ENCODE measurements at regions of chr1 and their contacts with region 1.

Region 1: DNA sequence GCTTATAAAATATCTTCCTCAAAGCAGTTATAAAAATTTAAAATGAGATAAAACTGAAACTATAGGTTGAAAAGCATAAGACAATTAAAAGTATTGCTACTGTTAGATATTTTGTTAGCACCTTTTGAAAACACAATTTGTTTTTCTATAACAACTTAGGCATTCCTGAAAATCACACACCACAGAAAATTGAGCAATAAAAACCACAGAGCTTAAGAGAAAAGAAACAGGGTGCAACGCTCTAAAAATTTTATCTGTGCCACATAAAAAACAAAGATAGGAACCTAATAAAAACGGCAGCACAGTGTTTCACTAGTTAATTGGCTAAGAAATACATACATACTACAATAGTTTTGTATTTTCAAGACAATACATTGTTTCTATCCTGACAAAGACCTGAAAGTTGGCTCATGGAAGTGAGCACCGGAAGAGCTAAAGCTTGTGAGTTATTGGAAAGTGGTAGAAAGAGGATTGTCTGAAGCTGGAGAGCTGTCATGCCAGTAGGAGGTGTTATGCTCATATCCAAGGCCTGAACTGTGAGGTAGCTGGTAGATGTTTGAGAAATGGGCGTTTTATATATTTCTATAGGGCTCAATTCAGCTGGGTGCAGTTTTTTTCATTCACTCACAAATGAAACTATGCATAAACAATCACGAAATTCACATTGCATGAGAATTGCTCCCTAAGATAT is 45.8 kb downstream of the RGS7 start:
- DNase-seq: no peak
- H3K4me3 ChIP-seq: no peak overlapping the region
- H3K27ac ChIP-seq: no peak overlapping the region
- H3K4me1 ChIP-seq: no peaks in the 10 kb centered on the region
- H3K27me3 ChIP-seq: no peaks in the 10 kb centered on the region
- CTCF ChIP-seq: no peak
- POLR2A ChIP-seq: no peak

Region 2: GRCh38 chr1:241156231-241156965 is 154.8 kb before region 1 on chr1:
- CTCF ChIA-PET with region 1: no interaction called
- POLR2A ChIA-PET with region 1: no interaction called
- dilution Hi-C with region 1: no loop called
- intact Hi-C with region 1: loop called (anchors 10 kb)
- DNase-seq: peak; percentile 28
- H3K4me3 ChIP-seq: no peak overlapping the region
- H3K27ac ChIP-seq: no peak overlapping the region
- H3K4me1 ChIP-seq: no peaks in the 10 kb centered on the region
- H3K27me3 ChIP-seq: no peaks in the 10 kb centered on the region
- CTCF ChIP-seq: no peak
- POLR2A ChIP-seq: no peak

Measured in endothelial cell of umbilical vein (primary cell).